ENCODE measurements at regions of chr22 and their contacts with region 1.

Region 1: GRCh38 chr22:36684841-36685240 is 18.7 kb downstream of the CACNG2 start:
- DNase-seq: no peak
- ATAC-seq: no peak
- H3K4me3 ChIP-seq: no peak overlapping the region
- H3K27ac ChIP-seq: no peak overlapping the region
- H3K4me1 ChIP-seq: no peaks in the 10 kb centered on the region
- H3K27me3 ChIP-seq: peaks cover 0 to 77% (median 58%) of the 10 kb centered on the region in 7 donors
- CTCF ChIP-seq: no peak

Region 2: DNA sequence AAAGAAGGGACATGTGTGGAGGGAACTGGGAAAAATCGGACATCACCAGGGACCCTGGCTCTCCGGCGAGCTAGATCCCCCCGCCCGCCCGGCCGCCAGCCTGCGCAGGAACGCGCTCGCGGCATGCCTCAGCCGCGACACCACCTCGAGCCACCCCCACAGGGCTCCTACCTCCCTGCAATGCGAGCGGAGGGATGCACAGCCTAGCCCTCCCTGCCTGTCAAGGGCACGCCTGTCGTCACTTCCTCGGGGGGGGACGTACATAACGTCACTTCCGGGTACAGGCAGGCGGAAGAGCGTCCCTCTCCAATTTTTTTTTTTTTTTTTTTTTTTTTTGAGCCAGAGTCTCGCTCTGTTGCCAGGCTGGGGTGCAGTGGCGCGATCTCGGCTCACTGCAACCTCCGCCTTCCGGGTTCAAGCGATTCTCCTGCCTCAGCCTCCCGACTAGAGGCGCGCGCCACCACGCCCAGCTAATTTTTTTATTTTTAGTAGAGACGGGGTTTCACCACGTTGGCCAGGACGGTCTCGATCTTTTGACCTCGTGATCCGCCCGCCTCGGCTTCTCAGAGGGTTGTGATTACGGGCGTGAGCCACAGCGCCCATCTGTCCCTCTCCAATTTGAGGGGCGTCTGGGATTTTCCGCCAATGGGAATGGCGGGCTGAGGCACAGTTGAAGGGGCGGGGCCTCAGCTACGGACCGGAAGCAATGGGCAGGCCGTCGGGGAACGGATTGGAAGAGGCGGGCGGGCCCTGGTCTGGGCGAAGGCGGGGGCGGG is 203.3 kb before region 1 on chr22 and contains the start of gene TXN2:
- intact Hi-C with region 1: no loop called
- DNase-seq: peak; percentile 97 to 98
- ATAC-seq: peak; percentile 94 to 97 (median 96)
- H3K4me3 ChIP-seq: peak within 1 kb of the TSS; percentile 55 to 94 (median 74)
- H3K27ac ChIP-seq: peak within 1 kb of the TSS; percentile 96 to 100 (median 99)
- H3K4me1 ChIP-seq: peaks cover 0 to 24% (median 20%) of the 10 kb centered on the region in 9 donors
- H3K27me3 ChIP-seq: no peaks in the 10 kb centered on the region
- CTCF ChIP-seq: no peak
- total RNA-seq, gene TXN2: 107 to 142 (median 122) TPM

Region 3: DNA sequence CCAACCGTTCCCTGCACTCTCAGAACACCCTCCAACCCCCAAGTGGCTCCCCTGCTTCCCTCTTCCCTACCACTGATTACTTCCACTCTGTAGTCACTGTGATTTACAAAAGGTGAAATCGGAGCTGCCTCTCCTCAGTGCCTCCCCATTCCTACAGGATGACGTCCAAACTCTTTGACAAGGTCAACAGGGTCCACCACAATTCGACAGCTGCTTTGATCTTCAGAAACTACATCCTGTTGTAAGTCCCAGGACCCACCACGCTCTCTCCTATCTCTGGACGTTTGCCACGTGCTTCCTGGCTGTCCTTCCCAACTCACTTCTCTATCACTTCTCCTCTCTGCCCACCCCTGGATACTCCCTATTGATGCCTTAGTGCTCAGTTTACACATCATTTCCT is 70.9 kb before region 1 on chr22:
- intact Hi-C with region 1: no loop called
- DNase-seq: no peak
- ATAC-seq: no peak
- H3K4me3 ChIP-seq: no peak overlapping the region
- H3K27ac ChIP-seq: no peak overlapping the region
- H3K4me1 ChIP-seq: peaks cover 0 to 10% (median 5%) of the 10 kb centered on the region in 9 donors
- H3K27me3 ChIP-seq: peaks cover 0 to 73% (median 34%) of the 10 kb centered on the region in 7 donors
- CTCF ChIP-seq: no peak

Region 4: DNA sequence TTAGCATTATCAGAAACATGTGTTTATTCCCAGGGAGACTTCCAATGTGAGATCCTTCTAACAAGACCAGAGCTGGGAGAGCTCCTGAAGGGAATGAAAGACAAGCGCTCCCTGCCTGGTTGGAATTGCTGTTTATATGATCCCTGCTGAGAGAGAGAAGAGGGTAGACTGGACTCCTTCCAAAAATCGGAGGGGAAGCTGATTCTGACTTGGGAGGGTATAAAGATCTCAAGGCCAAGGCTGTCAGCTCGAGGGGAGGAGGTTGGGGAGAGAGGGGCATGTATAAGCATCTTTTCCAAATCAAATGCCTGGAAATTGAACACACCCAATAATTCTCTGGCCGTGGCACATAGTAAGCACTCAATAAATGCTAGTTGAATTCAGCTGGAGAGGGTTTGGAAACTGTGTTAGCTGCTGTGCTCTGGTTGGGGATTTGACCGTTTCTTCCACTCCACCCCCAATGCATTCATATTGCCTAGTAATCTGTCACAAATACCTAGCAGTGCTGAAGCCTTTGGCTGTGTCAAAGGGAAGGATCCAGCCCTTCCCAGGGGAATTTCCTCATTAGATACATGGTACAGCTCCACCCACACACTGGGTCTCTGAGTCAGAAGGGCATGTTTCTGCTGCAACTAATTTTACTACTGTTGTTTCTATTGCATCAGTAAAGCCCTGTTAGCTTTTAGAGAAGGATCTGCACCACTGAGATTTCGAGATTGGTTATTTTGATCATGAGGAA is 42.8 kb before region 1 on chr22:
- intact Hi-C with region 1: loop called in 1 of 10 experiments (anchors 1 kb)
- DNase-seq: no peak
- ATAC-seq: no peak
- H3K4me3 ChIP-seq: no peak overlapping the region
- H3K27ac ChIP-seq: no peak overlapping the region
- H3K4me1 ChIP-seq: no peaks in the 10 kb centered on the region
- H3K27me3 ChIP-seq: peaks cover 0 to 67% (median 34%) of the 10 kb centered on the region in 7 donors
- CTCF ChIP-seq: no peak

Measured in heart right ventricle (tissue), 16 donors.